ENCODE measurements at regions of chr1 and their contacts with region 1.

Region 1: DNA sequence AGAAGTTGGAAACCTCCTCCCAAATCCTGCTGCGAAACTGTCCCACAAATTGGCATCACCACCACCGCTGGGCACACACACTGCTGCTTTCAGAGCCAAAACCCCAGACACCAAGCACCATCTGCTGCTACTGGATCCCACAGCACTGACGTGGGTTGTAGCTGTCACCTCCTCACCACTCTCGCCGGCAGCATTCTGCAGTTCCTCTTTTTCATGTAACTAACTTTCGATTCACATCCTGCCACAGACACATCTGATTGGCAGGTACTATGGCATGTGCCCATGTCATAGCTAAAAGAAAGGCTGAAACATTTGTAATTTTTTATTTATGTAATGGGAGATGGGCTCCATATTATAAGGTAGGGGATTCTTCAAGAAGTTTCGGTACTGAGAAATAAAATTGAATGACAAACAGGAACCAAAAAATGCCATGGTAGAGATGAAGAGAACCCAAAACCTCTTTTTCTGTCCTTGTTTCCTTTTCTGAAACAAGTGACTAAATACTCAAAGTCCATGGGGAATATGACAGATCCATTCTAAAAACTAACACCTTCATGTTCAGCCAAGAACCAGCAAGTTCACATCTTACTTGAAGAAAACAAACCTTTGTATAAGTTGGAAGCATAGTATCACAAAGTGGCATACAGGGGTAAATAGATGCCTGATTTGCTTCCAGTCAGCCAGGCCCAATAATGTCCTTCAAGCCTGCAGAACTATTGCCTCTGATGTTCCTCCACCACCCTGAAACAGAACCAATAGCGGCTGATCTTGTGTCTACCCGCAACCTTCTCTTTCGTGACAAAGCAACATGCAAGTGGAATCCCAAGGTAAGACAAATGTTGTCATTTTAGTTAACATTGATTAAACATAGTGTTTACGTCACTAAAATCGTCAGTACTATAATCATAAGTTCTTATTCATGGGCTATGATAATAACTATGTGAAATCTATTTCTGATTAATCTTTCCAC is 26.6 kb upstream of the RGS13 start:
- DNase-seq: peak in 1 of 5 donors; percentile 75
- H3K4me3 ChIP-seq: no peak overlapping the region
- H3K27ac ChIP-seq: no peak overlapping the region
- H3K4me1 ChIP-seq: no peaks in the 10 kb centered on the region
- H3K27me3 ChIP-seq: no peaks in the 10 kb centered on the region
- CTCF ChIP-seq: no peak

Region 2: GRCh38 chr1:192477630-192478029 is 131.8 kb before region 1 on chr1:
- intact Hi-C with region 1: loop called (anchors 10 kb)
- DNase-seq: peak in 2 of 5 donors; percentile 34 to 56
- H3K4me3 ChIP-seq: no peak overlapping the region
- H3K27ac ChIP-seq: no peak overlapping the region
- H3K4me1 ChIP-seq: no peaks in the 10 kb centered on the region
- H3K27me3 ChIP-seq: no peaks in the 10 kb centered on the region
- CTCF ChIP-seq: peak; percentile 52

Region 3: DNA sequence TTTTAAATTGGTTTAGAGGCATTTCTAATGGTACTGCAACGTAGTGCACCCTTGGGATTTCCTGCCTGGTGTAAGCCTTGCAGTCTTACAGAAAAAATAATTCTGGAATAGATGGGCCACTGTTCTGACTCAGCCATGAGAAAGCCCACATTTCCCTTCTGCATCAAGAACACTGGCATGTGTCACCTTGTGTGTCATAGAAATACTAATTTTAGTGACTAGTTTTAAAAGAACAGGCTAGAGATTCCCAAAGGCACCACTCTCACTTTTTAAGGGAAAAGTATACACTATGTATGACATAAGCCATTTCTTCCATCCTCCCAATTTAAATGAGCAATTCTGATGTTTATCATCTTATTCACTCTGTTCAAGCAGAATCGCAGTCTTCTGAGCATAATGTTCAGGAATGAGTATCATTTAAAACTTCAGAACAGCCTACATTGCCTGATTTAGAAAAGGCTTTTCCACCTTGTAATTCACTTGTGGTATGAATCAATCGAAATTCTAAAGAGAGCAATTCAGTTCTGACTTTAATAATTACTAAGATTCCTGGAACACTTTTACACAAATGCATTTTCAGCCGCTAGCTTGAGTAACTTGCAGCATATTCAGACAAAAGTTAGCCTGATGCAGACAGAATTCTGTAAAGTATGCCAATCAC is 45.3 kb after region 1 on chr1:
- intact Hi-C with region 1: no loop called
- DNase-seq: no peak
- H3K4me3 ChIP-seq: no peak overlapping the region
- H3K27ac ChIP-seq: no peak overlapping the region
- H3K4me1 ChIP-seq: no peaks in the 10 kb centered on the region
- H3K27me3 ChIP-seq: no peaks in the 10 kb centered on the region
- CTCF ChIP-seq: no peak

Region 4: DNA sequence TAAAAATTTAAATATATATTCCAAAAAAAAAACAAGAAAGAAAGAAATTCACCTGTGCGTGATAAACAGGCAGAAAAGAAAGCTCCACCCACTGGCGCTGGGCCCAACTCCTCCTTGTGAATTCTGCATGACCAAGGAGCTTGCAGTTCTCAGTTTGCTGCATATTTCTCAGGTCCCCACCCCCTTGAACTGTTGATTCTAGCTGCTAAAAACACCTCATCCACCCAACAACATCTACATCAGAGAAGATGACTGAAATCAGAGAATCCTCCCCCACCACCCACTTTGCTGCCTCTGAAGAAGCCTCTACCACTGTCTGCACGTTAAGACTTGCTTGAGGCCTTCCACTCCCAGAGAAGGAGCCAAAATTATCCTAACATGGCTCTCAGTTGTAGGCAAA is 304.3 kb after region 1 on chr1:
- intact Hi-C with region 1: no loop called
- DNase-seq: peak in 1 of 5 donors; percentile 21
- H3K4me3 ChIP-seq: no peak overlapping the region
- H3K27ac ChIP-seq: no peak overlapping the region
- H3K4me1 ChIP-seq: peaks cover 0 to 5% (median 3%) of the 10 kb centered on the region in 3 donors
- H3K27me3 ChIP-seq: no peaks in the 10 kb centered on the region
- CTCF ChIP-seq: no peak

Measured in kidney (tissue), 22 donors.